Cardiac septum (tissue), 1 donor: ENCODE measurements at regions of chr9 and their contacts with region 1.

Region 1: DNA sequence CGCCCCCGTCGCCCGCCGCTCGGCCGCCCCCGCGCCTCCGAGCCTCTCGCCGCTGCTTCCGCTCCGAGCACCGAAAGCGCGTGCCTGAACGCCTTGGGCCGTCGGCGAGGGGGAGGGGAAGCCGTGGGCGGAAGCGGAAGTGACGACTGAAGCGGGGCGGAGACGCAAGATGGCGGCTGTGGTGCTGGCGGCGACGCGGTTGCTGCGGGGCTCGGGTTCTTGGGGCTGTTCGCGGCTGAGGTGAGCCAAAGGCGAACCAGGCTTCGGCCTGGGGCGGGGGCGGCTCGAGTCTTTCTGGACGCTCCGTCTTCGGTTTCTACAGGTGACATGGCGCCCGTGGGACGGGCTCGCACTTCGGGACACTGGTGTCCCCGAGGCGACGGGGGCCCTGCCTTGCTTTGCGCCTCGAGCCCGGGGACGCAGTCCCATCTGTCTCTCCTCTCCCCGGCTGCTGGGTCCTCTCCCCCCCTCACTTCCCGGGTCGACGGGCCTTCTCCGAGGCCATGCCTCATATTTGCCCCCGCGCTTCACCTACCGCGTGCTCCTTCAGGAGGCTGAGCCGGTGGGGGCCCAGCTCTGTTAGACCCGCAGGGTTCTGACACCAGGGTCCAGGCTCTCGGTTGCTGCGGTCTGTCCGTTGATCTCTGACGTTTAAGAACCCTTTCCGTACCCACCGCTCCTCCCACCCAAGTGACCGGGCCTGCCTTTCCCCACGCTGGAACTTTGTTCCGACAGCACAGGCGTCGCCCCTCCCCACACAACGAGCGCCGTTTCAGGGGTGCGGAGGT is at the starts of genes ENTR1 and PMPCA:
- DNase-seq: peak; percentile 99
- total RNA-seq, gene ENTR1: 23.1 TPM
- total RNA-seq, gene PMPCA: 68.9 TPM

Region 2: DNA sequence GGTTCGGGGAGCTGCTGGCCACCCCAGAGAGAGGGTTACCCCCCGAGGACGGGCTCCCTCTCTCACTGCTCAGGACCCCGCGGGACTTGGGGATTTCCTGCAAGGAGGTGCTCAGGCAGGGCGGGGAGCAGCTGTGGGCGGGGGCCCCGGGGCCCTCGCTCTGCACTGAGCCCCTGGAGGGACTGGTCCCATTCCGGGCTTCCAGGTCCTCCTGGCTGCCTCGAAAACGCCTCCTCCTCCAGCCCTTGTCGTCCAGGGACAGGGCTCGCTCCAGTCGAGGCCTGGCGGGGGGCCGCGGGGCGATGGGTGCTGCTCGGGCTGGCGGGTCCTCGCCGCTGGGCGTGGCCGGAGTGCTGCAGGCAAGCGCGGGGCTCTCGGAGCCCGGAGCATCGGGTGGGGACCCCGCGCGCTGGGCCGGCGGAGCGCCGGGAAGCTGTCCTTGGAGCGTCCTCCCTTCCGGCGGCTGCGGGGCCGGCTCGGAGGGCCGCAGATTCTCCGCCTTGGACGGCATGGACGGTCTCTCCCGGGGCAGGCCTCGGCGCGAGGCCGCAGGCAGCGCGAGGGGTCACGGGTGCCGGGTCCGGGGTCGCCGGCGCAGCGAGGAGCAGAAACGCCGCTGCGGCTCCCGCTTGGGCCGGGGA is 28.3 kb after region 1 on chr9:
- intact Hi-C with region 1: loop called (anchors 1 kb)
- DNase-seq: no peak